ENCODE measurements at regions of chr7 and their contacts with region 1.

Region 1: GRCh38 chr7:83410989-83411591 is 237.8 kb downstream of the SEMA3E start:
- DNase-seq: no peak
- H3K4me3 ChIP-seq: no peak overlapping the region
- CTCF ChIP-seq: no peak
- POLR2A ChIP-seq: no peak

Region 2: GRCh38 chr7:83655951-83656556 is 245.0 kb after region 1 on chr7:
- intact Hi-C with region 1: loop called (anchors 5 kb)
- DNase-seq: no peak
- H3K4me3 ChIP-seq: no peak overlapping the region
- CTCF ChIP-seq: no peak
- POLR2A ChIP-seq: no peak

Measured in lower leg skin (tissue), 4 donors.